Caco-2 (cell line): ENCODE measurements at regions of chr2 and their contacts with region 1.

Region 1: DNA sequence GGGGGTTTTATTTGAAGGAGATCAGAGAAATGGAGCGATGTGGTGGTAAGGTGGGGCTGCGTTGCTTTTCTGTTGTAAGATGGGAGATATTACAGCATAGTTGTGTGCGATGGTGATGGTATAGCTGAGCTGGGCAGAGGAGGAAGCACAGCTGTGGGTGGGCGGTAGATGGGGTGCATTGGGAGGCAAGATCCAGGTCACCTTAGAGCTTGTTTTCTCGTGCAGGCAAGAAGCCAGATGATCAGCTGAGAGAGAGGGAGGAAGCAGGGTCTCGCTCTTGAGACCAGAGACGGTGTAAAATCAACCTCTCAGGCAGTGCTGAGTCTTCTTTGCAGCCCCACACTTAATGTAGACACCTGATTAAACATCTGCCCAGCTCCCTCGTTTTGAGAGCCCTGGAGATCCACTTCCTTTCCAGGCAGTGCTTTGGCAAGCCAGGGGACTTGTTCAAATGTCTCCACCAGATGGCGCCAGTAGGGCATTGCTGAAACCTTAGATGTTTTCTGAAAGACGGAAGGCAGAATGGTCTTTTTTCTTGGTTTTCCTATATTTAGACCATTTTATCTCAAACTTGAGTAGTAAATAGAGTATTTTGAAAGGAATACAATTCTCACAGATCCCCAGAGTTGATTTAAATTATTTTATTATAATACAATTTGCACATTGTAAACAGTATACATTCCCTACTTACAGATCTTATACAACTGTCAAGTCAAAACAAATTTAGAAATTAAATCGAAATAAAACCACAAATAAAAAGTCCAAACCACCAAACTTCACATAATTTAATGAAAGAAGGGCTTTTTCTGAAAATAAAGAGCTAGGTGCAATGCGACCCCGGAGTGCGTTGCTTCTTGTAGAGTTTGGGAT is 21.1 kb upstream of the LYPD6B start:
- DNase-seq: peak; percentile 82 to 87
- H3K4me3 ChIP-seq: no peak overlapping the region
- H3K4me3 Mint-ChIP-seq: no peak overlapping the region
- H3K27ac Mint-ChIP-seq: peak overlapping the region; percentile 64
- H3K4me1 ChIP-seq: peaks cover 33% of the 10 kb centered on the region
- H3K4me1 Mint-ChIP-seq: peaks cover 56% of the 10 kb centered on the region
- H3K27me3 ChIP-seq: no peaks in the 10 kb centered on the region
- H3K27me3 Mint-ChIP-seq: no peaks in the 10 kb centered on the region
- CTCF ChIP-seq: peak; percentile 91 to 92

Region 2: DNA sequence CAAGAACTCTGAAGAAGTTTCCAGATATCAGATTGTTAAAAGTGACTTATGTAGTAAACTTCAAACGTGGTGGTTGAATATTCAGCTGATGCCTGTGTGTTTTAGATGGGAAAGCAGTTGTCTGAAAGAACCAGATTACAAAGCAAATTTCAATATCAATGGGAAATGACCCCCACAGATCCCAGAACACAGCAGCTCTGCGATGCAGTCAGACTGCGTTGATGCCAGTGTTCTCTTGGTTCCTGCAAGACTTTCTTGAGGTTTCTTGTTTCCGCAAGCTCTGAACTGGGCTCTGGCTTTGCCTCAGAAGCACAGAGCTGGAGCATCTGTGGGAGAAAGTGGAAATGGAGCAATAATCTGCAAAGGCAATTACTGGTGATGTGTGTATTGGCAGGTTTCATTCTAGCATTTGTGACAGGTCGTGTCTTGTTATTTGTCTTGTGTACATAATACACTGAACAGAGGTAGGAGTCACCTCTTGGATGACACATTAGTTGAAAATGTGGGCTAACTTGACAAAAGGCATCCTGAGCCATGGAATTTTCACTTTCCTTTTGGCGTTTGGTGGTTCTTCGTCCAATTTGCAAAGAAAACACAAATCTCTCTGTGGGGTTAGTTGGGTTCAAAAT is 10.4 kb after region 1 on chr2:
- CTCF ChIA-PET with region 1: interaction called, 4 read pairs
- POLR2A ChIA-PET with region 1: no interaction called
- intact Hi-C with region 1: loop called (anchors 1 kb)
- DNase-seq: peak in 1 of 2 experiments; percentile 39
- H3K4me3 ChIP-seq: no peak overlapping the region
- H3K4me3 Mint-ChIP-seq: peak overlapping the region; percentile 41
- H3K27ac Mint-ChIP-seq: peak overlapping the region; percentile 65
- H3K4me1 ChIP-seq: peaks cover 43% of the 10 kb centered on the region
- H3K4me1 Mint-ChIP-seq: peaks cover 49% of the 10 kb centered on the region
- H3K27me3 ChIP-seq: no peaks in the 10 kb centered on the region
- H3K27me3 Mint-ChIP-seq: no peaks in the 10 kb centered on the region
- CTCF ChIP-seq: no peak

Region 3: DNA sequence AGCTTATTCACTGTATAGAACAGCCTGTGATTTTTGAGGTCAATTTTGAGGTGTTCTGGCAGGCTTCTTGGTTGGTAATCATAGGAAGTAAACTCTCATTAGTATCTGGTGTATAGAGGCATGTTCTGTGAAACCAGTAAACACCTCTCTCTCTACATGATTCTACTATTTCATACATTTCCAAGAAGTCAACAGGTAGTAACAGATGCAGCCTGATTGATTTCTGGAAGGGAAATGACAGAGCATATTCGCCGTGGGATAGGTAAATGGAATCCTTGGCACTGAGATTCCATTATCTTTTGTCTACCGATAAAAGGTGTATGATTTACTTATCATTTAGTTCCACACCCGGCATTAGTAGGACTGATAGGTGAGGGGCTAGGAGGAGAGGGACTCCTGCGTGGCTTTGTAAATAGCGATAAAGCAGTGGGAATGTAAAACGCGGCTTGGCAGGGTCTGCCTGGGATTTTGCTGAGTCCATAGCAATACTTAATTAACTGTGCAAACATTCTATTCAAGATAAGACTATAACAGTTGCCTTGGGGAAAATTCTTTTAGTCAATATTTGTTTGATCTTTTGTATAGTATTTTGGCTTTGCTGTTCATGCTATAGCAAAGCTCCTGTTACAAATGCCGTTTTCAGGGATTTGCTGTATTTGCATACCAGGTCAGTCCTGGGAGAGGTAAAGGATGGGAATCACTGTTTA is 53.5 kb after region 1 on chr2:
- CTCF ChIA-PET with region 1: no interaction called
- POLR2A ChIA-PET with region 1: no interaction called
- intact Hi-C with region 1: loop called (anchors 1 kb)
- DNase-seq: peak; percentile 75 to 89
- H3K4me3 ChIP-seq: 0 out of 2 replicates have a peak overlapping the region, but pooled peaks have one; percentile 3
- H3K4me3 Mint-ChIP-seq: peak overlapping the region; percentile 63
- H3K27ac Mint-ChIP-seq: peak overlapping the region; percentile 80
- H3K4me1 ChIP-seq: peaks cover 29% of the 10 kb centered on the region
- H3K4me1 Mint-ChIP-seq: peaks cover 53% of the 10 kb centered on the region
- H3K27me3 ChIP-seq: no peaks in the 10 kb centered on the region; the same call in 1 of the 2 replicates
- H3K27me3 Mint-ChIP-seq: no peaks in the 10 kb centered on the region
- CTCF ChIP-seq: no peak

Region 4: DNA sequence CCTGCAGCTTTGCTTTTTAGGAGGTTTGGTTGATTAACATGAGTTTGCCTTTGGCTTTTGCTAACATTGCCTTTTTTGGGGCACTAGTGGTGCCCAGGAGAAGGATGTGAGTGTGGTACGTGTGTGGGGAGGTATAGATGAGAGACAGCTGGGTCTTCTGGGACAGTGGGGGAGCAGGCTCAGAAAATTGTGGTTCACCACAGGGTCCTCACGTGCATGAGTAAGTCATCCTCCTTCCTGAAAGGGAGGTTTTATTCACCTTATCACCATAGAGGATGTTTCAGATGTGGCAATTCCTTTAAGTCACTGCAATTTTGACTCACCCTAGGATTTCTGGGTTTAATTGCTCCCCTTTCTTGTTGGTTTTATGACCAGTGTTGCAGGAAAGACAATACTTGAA is 150.1 kb after region 1 on chr2:
- CTCF ChIA-PET with region 1: interaction called, 3 read pairs
- POLR2A ChIA-PET with region 1: no interaction called
- intact Hi-C with region 1: loop called (anchors 5 kb)
- DNase-seq: no peak
- H3K4me3 ChIP-seq: no peak overlapping the region
- H3K4me3 Mint-ChIP-seq: no peak overlapping the region
- H3K27ac Mint-ChIP-seq: peak overlapping the region; percentile 25
- H3K4me1 ChIP-seq: peaks cover 43% of the 10 kb centered on the region
- H3K4me1 Mint-ChIP-seq: peaks cover 33% of the 10 kb centered on the region
- H3K27me3 ChIP-seq: no peaks in the 10 kb centered on the region
- H3K27me3 Mint-ChIP-seq: no peaks in the 10 kb centered on the region
- CTCF ChIP-seq: no peak

Region 5: GRCh38 chr2:149330126-149331022 is 313.0 kb after region 1 on chr2 and contains the start of gene LYPD6:
- CTCF ChIA-PET with region 1: interaction called, 5 read pairs
- POLR2A ChIA-PET with region 1: no interaction called
- intact Hi-C with region 1: loop called (anchors 5 kb)
- DNase-seq: peak; percentile 75 to 89
- H3K4me3 ChIP-seq: peak within 1 kb of the TSS; percentile 89
- H3K4me3 Mint-ChIP-seq: peak within 1 kb of the TSS; percentile 92
- H3K27ac Mint-ChIP-seq: peak within 1 kb of the TSS; percentile 72
- H3K4me1 ChIP-seq: no peaks in the 10 kb centered on the region; the same call in 1 of the 2 replicates
- H3K4me1 Mint-ChIP-seq: peaks cover 22% of the 10 kb centered on the region
- H3K27me3 ChIP-seq: no peaks in the 10 kb centered on the region
- H3K27me3 Mint-ChIP-seq: no peaks in the 10 kb centered on the region
- CTCF ChIP-seq: no peak
- total RNA-seq, gene LYPD6: 9.0 and 10.5 TPM in 2 replicates

Region 6: GRCh38 chr2:149438330-149438960 is 421.1 kb after region 1 on chr2:
- CTCF ChIA-PET with region 1: no interaction called
- POLR2A ChIA-PET with region 1: no interaction called
- intact Hi-C with region 1: loop called (anchors 5 kb)
- DNase-seq: peak; percentile 64 to 69
- H3K4me3 ChIP-seq: no peak overlapping the region
- H3K4me3 Mint-ChIP-seq: no peak overlapping the region
- H3K27ac Mint-ChIP-seq: peak overlapping the region; percentile 6
- H3K4me1 ChIP-seq: peaks cover 22% of the 10 kb centered on the region
- H3K4me1 Mint-ChIP-seq: peaks cover 22% of the 10 kb centered on the region
- H3K27me3 ChIP-seq: no peaks in the 10 kb centered on the region
- H3K27me3 Mint-ChIP-seq: no peaks in the 10 kb centered on the region
- CTCF ChIP-seq: no peak

Region 7: GRCh38 chr2:149573760-149574159 is 556.4 kb after region 1 on chr2:
- CTCF ChIA-PET with region 1: interaction called, 18 read pairs
- POLR2A ChIA-PET with region 1: no interaction called
- intact Hi-C with region 1: no loop called
- DNase-seq: no peak
- H3K4me3 ChIP-seq: no peak overlapping the region
- H3K4me3 Mint-ChIP-seq: no peak overlapping the region
- H3K27ac Mint-ChIP-seq: no peak overlapping the region
- H3K4me1 ChIP-seq: peaks cover 15% of the 10 kb centered on the region; the same call in 1 of the 2 replicates
- H3K4me1 Mint-ChIP-seq: peaks cover 14% of the 10 kb centered on the region
- H3K27me3 ChIP-seq: no peaks in the 10 kb centered on the region
- H3K27me3 Mint-ChIP-seq: no peaks in the 10 kb centered on the region
- CTCF ChIP-seq: peak; percentile 25 to 49